Esophagus squamous epithelium (tissue), 5 donors: ENCODE measurements at regions of chr17 and their contacts with region 1.

Region 1: GRCh38 chr17:10337976-10338375 is 34.8 kb downstream of the MYH13 start:
- DNase-seq: no peak
- H3K4me3 ChIP-seq: no peak overlapping the region
- H3K27ac ChIP-seq: no peak overlapping the region
- H3K4me1 ChIP-seq: no peaks in the 10 kb centered on the region
- H3K27me3 ChIP-seq: no peaks in the 10 kb centered on the region
- CTCF ChIP-seq: no peak
- POLR2A ChIP-seq: no peak

Region 2: DNA sequence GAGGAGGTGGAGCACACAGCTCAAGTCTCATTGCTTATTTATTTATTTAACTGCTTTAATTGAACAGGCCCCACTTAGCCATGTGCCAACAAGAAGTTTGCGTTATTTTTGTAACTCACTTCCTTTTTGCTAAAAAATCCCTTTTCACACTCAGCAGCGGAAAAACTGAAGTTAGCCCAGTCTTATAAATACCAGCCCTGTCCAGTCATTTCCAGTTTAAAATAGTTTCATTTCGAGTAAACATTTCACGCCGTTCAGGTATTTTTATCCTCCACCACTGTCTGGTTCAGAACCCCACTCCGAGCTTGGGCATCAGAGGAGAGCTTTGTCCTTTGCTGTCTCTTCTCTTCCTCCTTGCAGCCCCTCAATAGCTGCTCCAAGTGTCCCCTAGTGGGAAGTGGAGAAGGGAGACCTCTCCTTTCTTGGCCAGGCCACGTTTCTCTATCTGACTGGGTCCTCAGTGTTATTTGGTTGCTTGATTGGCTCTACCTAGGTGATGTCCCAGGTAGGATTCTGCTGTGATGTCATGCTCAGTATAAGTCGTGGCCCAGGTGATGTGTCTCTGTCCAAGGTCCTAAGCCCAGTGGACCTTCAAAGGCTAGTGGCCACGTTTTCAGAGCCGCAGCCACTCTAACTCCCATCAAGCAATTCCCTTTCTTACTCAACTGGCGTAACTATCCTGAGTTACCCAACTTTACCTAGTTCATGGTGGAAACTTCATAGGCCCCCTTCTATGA is 86.6 kb before region 1 on chr17:
- intact Hi-C with region 1: no loop called
- DNase-seq: no peak
- H3K4me3 ChIP-seq: no peak overlapping the region
- H3K27ac ChIP-seq: no peak overlapping the region
- H3K4me1 ChIP-seq: no peaks in the 10 kb centered on the region
- H3K27me3 ChIP-seq: no peaks in the 10 kb centered on the region
- CTCF ChIP-seq: no peak
- POLR2A ChIP-seq: no peak

Region 3: DNA sequence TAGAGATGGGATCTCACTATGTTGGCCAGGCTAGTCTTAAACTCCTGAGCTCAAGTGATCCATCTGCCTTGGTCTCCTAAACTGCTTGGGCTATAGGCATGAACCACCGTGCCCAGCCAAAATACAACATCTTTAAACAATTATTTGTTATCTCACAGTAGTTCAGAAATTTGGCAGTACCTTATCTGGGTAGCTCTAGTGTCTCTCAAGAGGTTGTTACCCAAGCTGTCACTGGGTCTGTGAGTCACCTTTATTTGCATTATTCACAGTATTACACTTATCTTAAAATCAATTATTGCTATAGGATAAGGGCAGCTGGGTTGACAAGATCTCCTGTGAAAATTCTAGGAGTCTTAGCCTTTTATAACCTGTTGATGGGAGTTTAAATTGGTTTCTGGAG is 75.5 kb before region 1 on chr17:
- intact Hi-C with region 1: no loop called
- DNase-seq: no peak
- H3K4me3 ChIP-seq: no peak overlapping the region
- H3K27ac ChIP-seq: no peak overlapping the region
- H3K4me1 ChIP-seq: no peaks in the 10 kb centered on the region
- H3K27me3 ChIP-seq: no peaks in the 10 kb centered on the region
- CTCF ChIP-seq: no peak
- POLR2A ChIP-seq: no peak

Region 4: GRCh38 chr17:10618202-10618635 is 280.2 kb after region 1 on chr17:
- intact Hi-C with region 1: loop called (anchors 10 kb)
- DNase-seq: no peak
- H3K4me3 ChIP-seq: no peak overlapping the region
- H3K27ac ChIP-seq: no peak overlapping the region
- H3K4me1 ChIP-seq: peaks cover 0 to 44% (median 7%) of the 10 kb centered on the region in 3 donors
- H3K27me3 ChIP-seq: no peaks in the 10 kb centered on the region
- CTCF ChIP-seq: peak in 5 of 6 experiments; percentile 64 to 80 (median 72)
- POLR2A ChIP-seq: no peak

Region 5: GRCh38 chr17:10871914-10872313 is 533.9 kb after region 1 on chr17:
- intact Hi-C with region 1: no loop called
- DNase-seq: no peak
- H3K4me3 ChIP-seq: no peak overlapping the region
- H3K27ac ChIP-seq: no peak overlapping the region
- H3K4me1 ChIP-seq: no peaks in the 10 kb centered on the region
- H3K27me3 ChIP-seq: no peaks in the 10 kb centered on the region
- CTCF ChIP-seq: no peak
- POLR2A ChIP-seq: no peak